Ascending aorta (tissue), 2 donors: ENCODE measurements at regions of chr17 and their contacts with region 1.

Region 1: GRCh38 chr17:61201232-61201640 is 198.4 kb upstream of the TBX2 start:
- DNase-seq: peak in 1 of 2 donors; percentile 81
- H3K4me3 ChIP-seq: peak overlapping the region; percentile 34 to 46
- H3K27ac ChIP-seq: peak overlapping the region; percentile 73 to 86
- H3K4me1 ChIP-seq: peaks cover 4 to 27% of the 10 kb centered on the region in 2 donors
- H3K27me3 ChIP-seq: no peaks in the 10 kb centered on the region
- CTCF ChIP-seq: no peak

Region 2: GRCh38 chr17:60901806-60902205 is 299.4 kb before region 1 on chr17:
- intact Hi-C with region 1: loop called (anchors 5 kb)
- DNase-seq: no peak
- H3K4me3 ChIP-seq: peak overlapping the region in 1 of 2 donors; percentile 26
- H3K27ac ChIP-seq: peak overlapping the region; percentile 71 to 86
- H3K4me1 ChIP-seq: peaks cover 0 to 10% of the 10 kb centered on the region in 2 donors
- H3K27me3 ChIP-seq: no peaks in the 10 kb centered on the region
- CTCF ChIP-seq: no peak

Region 3: GRCh38 chr17:61106354-61106753 is 94.9 kb before region 1 on chr17:
- intact Hi-C with region 1: no loop called
- DNase-seq: no peak
- H3K4me3 ChIP-seq: no peak overlapping the region
- H3K27ac ChIP-seq: no peak overlapping the region
- H3K4me1 ChIP-seq: peaks cover 0 to 6% of the 10 kb centered on the region in 2 donors
- H3K27me3 ChIP-seq: no peaks in the 10 kb centered on the region
- CTCF ChIP-seq: no peak

Region 4: DNA sequence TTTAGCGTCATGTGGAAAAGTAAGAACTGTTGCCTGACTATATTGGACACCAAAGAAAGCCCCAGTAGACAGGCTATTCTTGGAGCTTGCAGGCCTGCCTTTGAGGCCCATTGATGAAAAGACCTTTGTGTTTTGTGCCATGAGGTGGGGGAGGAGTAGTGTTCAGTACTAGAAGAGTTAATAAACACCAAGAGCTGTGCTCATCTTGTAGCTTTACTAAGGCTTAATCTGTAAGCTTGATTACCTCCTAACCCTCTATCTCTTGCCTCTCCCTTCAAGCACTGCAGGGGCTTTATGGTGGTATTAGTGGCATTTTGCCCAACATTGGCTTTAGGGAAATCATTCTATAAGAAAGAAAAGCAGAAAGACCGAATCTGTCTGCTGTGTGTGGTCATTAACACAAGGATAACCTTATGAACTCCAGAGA is 21.8 kb before region 1 on chr17:
- intact Hi-C with region 1: no loop called
- DNase-seq: no peak
- H3K4me3 ChIP-seq: no peak overlapping the region
- H3K27ac ChIP-seq: no peak overlapping the region
- H3K4me1 ChIP-seq: no peaks in the 10 kb centered on the region
- H3K27me3 ChIP-seq: no peaks in the 10 kb centered on the region
- CTCF ChIP-seq: no peak

Region 5: GRCh38 chr17:61251939-61252896 is 51.0 kb after region 1 on chr17:
- intact Hi-C with region 1: loop called (anchors 1 kb)
- DNase-seq: peak; percentile 90 to 99
- H3K4me3 ChIP-seq: no peak overlapping the region
- H3K27ac ChIP-seq: peak overlapping the region; percentile 73 to 91
- H3K4me1 ChIP-seq: peaks cover 6 to 55% of the 10 kb centered on the region in 2 donors
- H3K27me3 ChIP-seq: no peaks in the 10 kb centered on the region
- CTCF ChIP-seq: no peak

Region 6: GRCh38 chr17:61260071-61260797 is 59.0 kb after region 1 on chr17:
- intact Hi-C with region 1: loop called (anchors 2 kb)
- DNase-seq: no peak
- H3K4me3 ChIP-seq: no peak overlapping the region
- H3K27ac ChIP-seq: peak overlapping the region; percentile 76 to 79
- H3K4me1 ChIP-seq: peaks cover 0 to 24% of the 10 kb centered on the region in 2 donors
- H3K27me3 ChIP-seq: no peaks in the 10 kb centered on the region
- CTCF ChIP-seq: no peak

Region 7: GRCh38 chr17:61314368-61315078 is 113.3 kb after region 1 on chr17:
- intact Hi-C with region 1: loop called (anchors 5 kb)
- DNase-seq: peak; percentile 25 to 87
- H3K4me3 ChIP-seq: peak overlapping the region in 1 of 2 donors; percentile 27
- H3K27ac ChIP-seq: peak overlapping the region; percentile 77 to 88
- H3K4me1 ChIP-seq: peaks cover 6 to 16% of the 10 kb centered on the region in 2 donors
- H3K27me3 ChIP-seq: no peaks in the 10 kb centered on the region
- CTCF ChIP-seq: peak in 1 of 3 experiments; percentile 19

Region 8: GRCh38 chr17:61338000-61338798 is 137.0 kb after region 1 on chr17:
- intact Hi-C with region 1: loop called (anchors 2 kb)
- DNase-seq: peak in 1 of 2 donors; percentile 77
- H3K4me3 ChIP-seq: no peak overlapping the region
- H3K27ac ChIP-seq: peak overlapping the region; percentile 56 to 78
- H3K4me1 ChIP-seq: peaks cover 6 to 25% of the 10 kb centered on the region in 2 donors
- H3K27me3 ChIP-seq: no peaks in the 10 kb centered on the region
- CTCF ChIP-seq: no peak

Region 9: DNA sequence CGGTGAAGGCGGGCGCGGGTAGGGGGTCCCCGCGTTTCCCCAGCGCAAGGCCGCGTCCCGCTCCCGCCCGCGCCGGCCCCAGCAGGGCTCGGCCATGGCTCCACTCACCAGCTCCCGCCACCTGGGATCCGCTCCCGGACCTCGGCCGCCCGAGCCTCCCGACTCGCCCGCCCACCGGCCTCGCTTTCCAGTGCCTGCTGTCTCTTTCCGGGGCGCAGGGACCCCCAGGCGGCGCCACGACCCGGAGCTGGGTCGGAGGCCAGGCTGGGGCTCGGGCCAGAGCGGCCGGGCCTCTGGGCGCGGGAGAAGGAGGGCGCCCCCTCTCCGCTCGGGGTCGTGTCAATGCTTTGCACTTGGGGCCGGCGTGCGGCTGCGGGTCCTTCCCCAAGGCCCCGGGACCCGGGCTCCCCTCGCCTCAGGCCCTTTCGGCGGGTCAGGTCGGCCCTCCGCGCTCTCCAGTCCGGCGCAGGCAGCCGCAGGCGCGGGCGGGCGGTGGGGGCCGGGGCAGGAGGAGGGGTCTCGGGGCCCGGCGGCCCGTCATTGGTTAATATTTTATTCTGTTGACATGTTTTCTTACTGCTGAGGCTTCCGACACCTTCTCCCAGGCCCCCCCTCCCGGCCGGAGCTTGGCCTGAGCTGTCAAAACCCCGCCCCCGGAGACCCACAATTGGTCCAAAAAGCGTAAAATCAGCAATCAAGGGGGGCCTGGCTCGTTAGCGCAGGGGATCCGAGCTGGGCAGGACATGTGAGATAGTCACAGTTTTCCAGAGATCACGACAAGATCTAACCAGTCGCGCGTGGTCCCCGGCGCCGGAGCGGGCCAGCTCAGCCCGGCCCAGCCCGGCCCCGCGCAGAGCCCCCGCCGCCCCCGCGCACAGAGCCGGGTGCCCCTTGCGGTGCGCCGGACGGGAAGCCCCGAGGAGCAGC is 198.2 kb after region 1 on chr17 and contains the start of gene TBX2:
- intact Hi-C with region 1: loop called (anchors 1 kb)
- DNase-seq: peak; percentile 50 to 93
- H3K4me3 ChIP-seq: peak within 1 kb of the TSS; percentile 64 to 83
- H3K27ac ChIP-seq: peak within 1 kb of the TSS; percentile 92 to 94
- H3K4me1 ChIP-seq: peaks cover 0 to 15% of the 10 kb centered on the region in 2 donors
- H3K27me3 ChIP-seq: peaks cover 4% of the 10 kb centered on the region
- CTCF ChIP-seq: peak in 1 of 3 experiments; percentile 5
- total RNA-seq, gene TBX2: 100 TPM